Activated CD4-positive, alpha-beta memory T cell treated with anti-CD3 and anti-CD28 coated beads, Interleukin-2, amount 10 ng/mL, durations not matched to agents 7 days and 5 days (primary cell): ENCODE measurements at regions of chr22 and their contacts with region 1.

Region 1: DNA sequence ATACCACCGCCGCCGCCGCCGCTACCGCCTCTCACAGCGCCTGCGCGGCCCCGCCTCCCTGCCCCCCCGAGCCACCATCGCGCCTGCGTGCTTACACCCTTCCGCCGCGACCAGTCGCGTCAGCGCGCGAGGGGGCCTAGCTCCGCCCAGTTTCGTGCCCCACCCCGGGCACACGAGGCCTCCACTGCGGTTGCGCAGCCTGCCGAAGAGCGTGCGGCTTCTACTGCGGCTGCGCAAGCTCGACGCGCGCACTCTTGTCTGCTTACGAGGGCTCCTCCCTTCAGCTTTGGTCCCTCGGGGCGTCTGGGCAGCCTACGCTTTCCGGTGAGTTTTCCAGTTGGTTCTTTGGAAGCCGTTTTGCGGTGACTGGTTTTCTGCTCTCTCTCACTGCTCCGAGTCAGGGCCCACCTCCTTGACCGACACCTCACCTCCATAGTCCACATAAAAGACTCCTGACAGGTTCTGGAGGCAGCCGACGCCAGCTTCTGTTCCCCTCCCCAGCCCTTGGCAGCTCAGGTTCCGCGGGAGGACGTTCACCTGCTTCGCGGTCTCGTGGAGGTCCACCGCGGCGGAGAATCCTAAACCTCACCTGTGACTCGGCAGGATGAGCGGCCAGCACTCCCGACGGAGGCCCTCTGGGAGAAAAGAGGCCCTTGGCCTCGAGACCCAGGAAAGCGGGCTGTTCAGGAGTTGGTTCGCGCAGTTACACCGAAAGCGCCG is at the start of gene PITPNB:
- DNase-seq: peak; percentile 98
- H3K4me3 Mint-ChIP-seq: peak within 1 kb of the TSS; percentile 100
- H3K27ac Mint-ChIP-seq: peak within 1 kb of the TSS; percentile 99
- H3K4me1 Mint-ChIP-seq: peaks cover 73% of the 10 kb centered on the region
- H3K27me3 Mint-ChIP-seq: no peaks in the 10 kb centered on the region
- total RNA-seq, gene PITPNB: 85.7 to 96.0 TPM

Region 2: GRCh38 chr22:27885977-27886842 is 33.2 kb before region 1 on chr22:
- CTCF ChIA-PET with region 1: interaction called, 19 read pairs
- POLR2A ChIA-PET with region 1: interaction called, 13 read pairs
- DNase-seq: peak; percentile 40
- H3K4me3 Mint-ChIP-seq: no peak overlapping the region
- H3K27ac Mint-ChIP-seq: no peak overlapping the region
- H3K4me1 Mint-ChIP-seq: peaks cover 2% of the 10 kb centered on the region
- H3K27me3 Mint-ChIP-seq: no peaks in the 10 kb centered on the region

Region 3: DNA sequence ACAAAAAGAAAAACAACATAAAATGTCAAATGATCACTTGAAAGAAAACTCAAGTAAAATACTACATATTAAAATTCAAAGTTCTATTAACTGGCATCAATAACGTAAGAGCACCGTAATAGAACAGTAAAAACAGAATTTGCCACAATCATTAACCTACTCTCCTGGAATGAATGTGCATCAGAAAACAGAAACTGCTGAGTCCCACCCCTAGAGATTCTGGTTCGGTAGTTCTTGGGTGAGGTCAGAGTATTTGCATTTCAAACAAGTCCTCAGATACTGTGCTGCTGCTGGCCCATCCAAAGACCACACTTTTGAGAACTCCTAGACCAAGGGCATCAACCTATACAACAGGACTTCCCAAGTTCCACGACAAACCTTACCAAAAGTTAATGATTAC is 23.8 kb before region 1 on chr22:
- CTCF ChIA-PET with region 1: interaction called, 4 read pairs
- POLR2A ChIA-PET with region 1: interaction called, 43 read pairs
- DNase-seq: no peak
- H3K4me3 Mint-ChIP-seq: no peak overlapping the region
- H3K27ac Mint-ChIP-seq: peak overlapping the region; percentile 47
- H3K4me1 Mint-ChIP-seq: peaks cover 26% of the 10 kb centered on the region
- H3K27me3 Mint-ChIP-seq: no peaks in the 10 kb centered on the region